Posterior vena cava (tissue), 2 donors: ENCODE measurements at regions of chr2 and their contacts with region 1.

Region 1: DNA sequence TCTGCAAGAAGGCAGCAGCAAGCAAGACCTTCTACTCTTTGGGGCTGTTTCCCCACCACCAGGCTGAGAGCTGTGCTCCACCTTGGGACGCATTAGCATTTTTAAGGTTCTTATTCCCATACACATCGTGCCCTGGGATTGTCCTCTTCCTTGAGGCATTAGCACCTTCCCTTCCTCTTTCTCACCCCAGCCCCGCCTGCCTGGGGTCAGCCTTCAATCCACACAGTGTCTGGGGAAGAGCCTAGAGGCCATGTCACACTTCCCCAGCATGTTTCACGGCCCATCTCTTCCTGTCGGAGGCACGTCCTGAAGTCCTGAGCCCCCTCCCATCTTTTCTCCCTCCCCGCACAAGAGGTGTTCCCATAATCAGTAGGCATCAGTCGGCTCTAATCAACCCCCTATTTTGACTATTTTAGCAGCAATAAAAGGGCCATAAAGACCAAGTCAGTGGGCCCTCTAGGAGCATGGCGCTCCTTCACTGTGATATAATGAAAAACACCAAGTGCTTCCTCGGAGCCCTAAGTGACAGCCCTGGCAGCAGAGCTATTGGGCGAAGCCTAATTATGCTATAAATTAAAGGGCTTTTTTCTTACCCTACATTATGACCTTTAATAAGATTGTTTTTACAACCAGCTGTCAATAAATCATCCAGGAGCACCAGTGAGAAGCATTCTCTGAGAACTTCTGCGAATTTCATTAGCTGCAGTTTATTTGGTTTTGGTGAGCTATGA is 55.0 kb upstream of the PKDCC start:
- DNase-seq: no peak

Region 2: GRCh38 chr2:41869542-41870264 is 123.2 kb before region 1 on chr2:
- intact Hi-C with region 1: loop called in 1 of 2 experiments (anchors 1 kb)
- DNase-seq: peak; percentile 92